ENCODE measurements at regions of chr16 and their contacts with region 1.

Region 1: GRCh38 chr16:81940781-81941560 is 70.3 kb downstream of the SDR42E1 start:
- H3K4me3 ChIP-seq: no peak overlapping the region
- H3K27ac ChIP-seq: no peak overlapping the region
- H3K4me1 ChIP-seq: no peaks in the 10 kb centered on the region
- CTCF ChIP-seq: no peak

Region 2: DNA sequence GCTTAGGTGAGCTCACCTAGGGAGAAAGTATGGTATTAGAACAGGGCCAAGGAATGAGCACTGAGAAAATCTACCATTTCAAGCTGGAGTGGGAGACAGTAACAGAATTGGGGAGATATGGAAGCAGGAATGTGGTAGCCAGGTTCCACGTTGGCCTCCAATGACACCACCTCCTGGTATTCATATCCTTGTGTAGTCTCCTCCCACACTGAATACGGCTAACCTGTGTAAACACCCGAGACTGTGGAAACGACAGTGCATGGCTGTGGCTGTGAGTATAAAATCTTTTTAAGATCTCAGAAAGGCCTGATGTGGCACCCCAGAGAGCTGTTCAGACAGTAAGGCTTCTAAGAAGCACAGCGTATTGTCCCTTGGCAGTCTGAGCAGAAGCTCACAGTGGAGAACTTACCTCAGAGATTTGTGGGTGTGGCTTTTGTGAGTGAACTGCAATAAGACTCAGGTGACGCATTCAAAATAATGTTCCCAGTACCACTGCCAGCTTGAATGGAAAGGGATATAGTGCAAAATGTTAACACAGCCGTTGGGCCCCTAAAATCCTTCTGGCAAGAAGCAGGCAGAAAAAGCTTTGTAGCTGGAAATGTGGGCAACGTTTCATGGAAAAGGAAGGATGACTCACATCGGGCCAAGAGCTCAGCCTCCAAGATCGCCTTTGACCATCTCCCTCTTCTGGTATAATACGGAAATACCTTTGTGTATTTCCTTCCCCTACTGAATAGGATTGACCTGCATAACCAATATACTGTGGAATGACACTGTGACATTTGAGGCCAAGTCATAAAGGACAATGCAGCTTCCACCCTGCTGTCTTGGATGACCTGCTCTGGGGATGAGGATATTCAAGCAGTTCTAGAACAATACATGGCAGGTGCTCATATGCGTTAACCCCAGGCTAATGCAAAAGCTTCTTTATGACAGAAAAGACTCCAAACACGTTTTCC is 56.0 kb after region 1 on chr16:
- CTCF ChIA-PET with region 1: interaction called, 30 read pairs
- POLR2A ChIA-PET with region 1: no interaction called
- H3K4me3 ChIP-seq: no peak overlapping the region
- H3K27ac ChIP-seq: no peak overlapping the region
- H3K4me1 ChIP-seq: no peaks in the 10 kb centered on the region
- CTCF ChIP-seq: no peak